ENCODE measurements at regions of chr2 and their contacts with region 1.

Region 1: DNA sequence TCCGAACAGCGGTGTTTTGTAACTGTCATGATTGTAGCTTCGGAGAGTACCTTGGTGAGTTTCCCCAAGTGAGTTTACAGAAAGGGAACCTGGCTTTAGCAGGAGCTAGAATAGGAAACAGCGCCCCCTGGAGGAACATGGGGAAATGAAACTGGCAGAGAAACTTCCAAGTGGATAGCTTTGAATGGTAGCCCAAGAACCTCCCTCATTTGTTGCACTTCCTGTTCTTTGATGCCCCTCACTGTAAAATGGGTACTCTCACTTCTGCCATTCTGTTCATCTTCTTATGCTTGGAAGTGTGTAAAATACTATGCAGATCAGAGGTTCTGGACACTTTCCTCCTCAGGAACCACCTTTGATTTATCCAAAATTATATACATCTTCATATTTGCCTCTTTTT is 36.2 kb downstream of the CHST10 start:
- DNase-seq: peak; percentile 65
- H3K4me3 ChIP-seq: no peak overlapping the region
- H3K4me3 Mint-ChIP-seq: no peak overlapping the region
- H3K27ac Mint-ChIP-seq: no peak overlapping the region
- H3K4me1 ChIP-seq: no peaks in the 10 kb centered on the region
- H3K4me1 Mint-ChIP-seq: no peaks in the 10 kb centered on the region
- H3K27me3 ChIP-seq: no peaks in the 10 kb centered on the region
- H3K27me3 Mint-ChIP-seq: peaks cover 8% of the 10 kb centered on the region
- CTCF ChIP-seq: peak; percentile 56 to 60

Region 2: DNA sequence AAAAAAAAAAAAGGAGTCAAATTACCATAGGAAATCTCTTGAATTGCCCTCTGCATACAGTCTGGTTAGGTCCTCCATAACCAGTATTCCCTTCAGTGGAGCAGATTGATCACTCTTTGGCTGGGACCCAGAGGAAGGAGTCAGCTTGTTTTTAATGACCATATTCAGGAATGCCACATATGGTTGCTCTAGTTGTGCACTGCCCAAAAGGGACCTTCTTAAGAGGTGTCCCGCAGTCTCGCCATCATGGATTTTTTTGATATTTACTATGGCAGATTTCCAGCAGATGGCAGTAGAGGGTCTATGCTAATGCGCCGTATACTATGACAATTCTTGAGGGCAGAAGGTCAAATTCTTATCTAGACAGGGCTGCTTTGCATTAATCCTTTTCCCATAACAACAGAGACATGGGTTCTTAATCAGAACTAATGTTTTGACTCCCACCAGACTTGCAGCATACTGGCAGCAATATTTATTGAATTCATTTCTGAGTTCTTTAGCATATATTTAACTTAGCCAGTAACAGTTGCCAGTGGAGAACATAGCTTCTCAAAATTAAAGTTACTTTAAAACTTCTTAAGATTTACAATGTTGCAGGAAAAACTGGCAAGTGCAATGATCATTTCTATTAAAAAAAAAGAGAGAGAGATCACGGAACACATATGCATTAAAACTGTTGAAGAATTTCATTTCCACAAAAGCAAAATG is 1968.3 kb before region 1 on chr2:
- CTCF ChIA-PET with region 1: no interaction called
- POLR2A ChIA-PET with region 1: no interaction called
- intact Hi-C with region 1: no loop called
- DNase-seq: peak in 1 of 2 experiments; percentile 83
- H3K4me3 ChIP-seq: no peak overlapping the region
- H3K4me3 Mint-ChIP-seq: no peak overlapping the region
- H3K27ac Mint-ChIP-seq: no peak overlapping the region
- H3K4me1 ChIP-seq: 0 out of 2 replicates have a peak, but pooled peaks cover 3% of the 10 kb centered on the region
- H3K4me1 Mint-ChIP-seq: peaks cover 4% of the 10 kb centered on the region
- H3K27me3 ChIP-seq: no peaks in the 10 kb centered on the region
- H3K27me3 Mint-ChIP-seq: no peaks in the 10 kb centered on the region
- CTCF ChIP-seq: peak; percentile 71 to 76

Region 3: DNA sequence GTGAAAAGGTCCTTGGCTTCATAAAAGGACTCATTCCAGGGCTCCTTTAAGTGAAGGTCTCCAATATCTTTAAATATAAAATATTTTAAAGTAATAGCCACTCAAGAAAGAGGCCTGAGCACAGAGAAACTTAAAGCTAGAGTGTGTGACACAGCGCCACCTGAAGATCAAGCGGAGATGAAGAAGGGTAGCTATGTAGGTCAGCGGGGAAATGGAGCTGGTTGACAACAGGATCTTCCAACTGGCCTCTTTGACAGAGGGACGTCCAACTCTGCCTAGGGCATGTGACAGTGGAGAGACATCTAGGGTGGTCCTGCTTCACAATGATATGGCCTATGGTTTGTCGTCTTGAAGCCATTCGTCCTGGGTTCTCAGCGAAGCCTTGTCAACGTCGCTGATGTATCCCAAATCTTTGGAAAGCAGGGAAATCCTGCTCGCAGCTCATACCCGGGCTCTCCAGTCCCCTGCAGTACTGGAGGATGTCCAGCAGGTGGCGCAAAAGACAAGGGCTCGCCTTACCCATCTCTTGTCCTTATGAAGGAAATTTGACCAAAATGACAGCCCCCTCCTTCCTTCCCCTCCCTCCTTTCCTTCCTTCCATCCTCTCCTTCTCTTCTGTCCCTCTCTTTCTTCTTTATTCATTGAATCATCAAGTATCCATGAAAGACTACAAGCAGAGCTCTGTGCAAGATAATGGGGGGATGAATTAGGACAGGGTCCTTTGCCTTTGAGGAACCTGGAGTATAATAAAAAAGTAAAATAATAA is 118.5 kb before region 1 on chr2:
- CTCF ChIA-PET with region 1: interaction called, 8 read pairs
- POLR2A ChIA-PET with region 1: no interaction called
- intact Hi-C with region 1: loop called (anchors 1 kb)
- DNase-seq: peak; percentile 54 to 63
- H3K4me3 ChIP-seq: no peak overlapping the region
- H3K4me3 Mint-ChIP-seq: no peak overlapping the region
- H3K27ac Mint-ChIP-seq: no peak overlapping the region
- H3K4me1 ChIP-seq: no peaks in the 10 kb centered on the region
- H3K4me1 Mint-ChIP-seq: no peaks in the 10 kb centered on the region
- H3K27me3 ChIP-seq: no peaks in the 10 kb centered on the region; the same call in 1 of the 2 replicates
- H3K27me3 Mint-ChIP-seq: peaks cover 11% of the 10 kb centered on the region
- CTCF ChIP-seq: peak; percentile 79 to 90

Measured in Caco-2 (cell line).